ENCODE measurements at regions of chr19 and their contacts with region 1.

Region 1: GRCh38 chr19:23969630-23970029 is 54.9 kb downstream of the ZNF726 start:
- DNase-seq: no peak
- H3K4me3 ChIP-seq: no peak overlapping the region
- H3K27ac ChIP-seq: no peak overlapping the region
- H3K4me1 ChIP-seq: no peaks in the 10 kb centered on the region
- H3K27me3 ChIP-seq: no peaks in the 10 kb centered on the region
- CTCF ChIP-seq: no peak

Region 2: DNA sequence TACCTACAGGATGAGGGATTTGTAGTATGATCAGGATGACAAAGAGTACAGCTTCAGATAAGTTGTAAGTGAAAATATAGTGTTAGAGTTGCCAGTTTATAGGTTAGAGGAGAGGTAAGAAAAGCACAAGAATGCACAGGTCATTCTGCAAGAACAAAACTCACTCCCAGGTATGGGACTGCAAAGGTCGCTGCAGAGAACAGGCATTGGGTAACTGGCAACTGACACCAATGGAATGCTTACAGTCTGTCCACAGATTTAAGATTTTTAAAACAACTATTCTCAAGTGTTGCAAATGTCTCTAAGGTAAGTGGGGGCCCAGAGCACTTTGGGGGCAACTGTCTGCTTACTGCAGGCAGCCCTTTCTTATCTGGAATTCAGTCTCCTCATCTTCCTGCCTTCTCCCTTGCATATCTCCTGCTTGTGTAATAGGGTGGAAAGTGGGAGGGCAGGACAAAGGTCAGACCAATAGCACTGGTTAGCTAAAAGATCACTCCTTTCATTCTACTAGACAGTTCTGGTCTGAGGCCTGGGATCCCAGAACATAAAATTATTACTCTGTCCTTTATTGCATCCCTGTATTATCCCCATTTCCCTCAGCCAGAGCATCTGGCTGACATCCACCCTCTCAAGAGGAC is 97.2 kb before region 1 on chr19:
- intact Hi-C with region 1: loop called (anchors 5 kb)
- DNase-seq: no peak
- H3K4me3 ChIP-seq: no peak overlapping the region
- H3K27ac ChIP-seq: no peak overlapping the region
- H3K4me1 ChIP-seq: no peaks in the 10 kb centered on the region
- H3K27me3 ChIP-seq: no peaks in the 10 kb centered on the region
- CTCF ChIP-seq: no peak